Sigmoid colon (tissue), 7 donors: ENCODE measurements at regions of chr4 and their contacts with region 1.

Region 1: GRCh38 chr4:148089624-148090023 is 352.6 kb downstream of the NR3C2 start:
- DNase-seq: no peak
- H3K4me3 ChIP-seq: no peak overlapping the region
- H3K27ac ChIP-seq: no peak overlapping the region
- H3K4me1 ChIP-seq: peaks cover 0 to 26% (median 6%) of the 10 kb centered on the region in 4 donors
- H3K27me3 ChIP-seq: no peaks in the 10 kb centered on the region
- CTCF ChIP-seq: no peak
- EP300 ChIP-seq: no peak
- POLR2A ChIP-seq: no peak

Region 2: DNA sequence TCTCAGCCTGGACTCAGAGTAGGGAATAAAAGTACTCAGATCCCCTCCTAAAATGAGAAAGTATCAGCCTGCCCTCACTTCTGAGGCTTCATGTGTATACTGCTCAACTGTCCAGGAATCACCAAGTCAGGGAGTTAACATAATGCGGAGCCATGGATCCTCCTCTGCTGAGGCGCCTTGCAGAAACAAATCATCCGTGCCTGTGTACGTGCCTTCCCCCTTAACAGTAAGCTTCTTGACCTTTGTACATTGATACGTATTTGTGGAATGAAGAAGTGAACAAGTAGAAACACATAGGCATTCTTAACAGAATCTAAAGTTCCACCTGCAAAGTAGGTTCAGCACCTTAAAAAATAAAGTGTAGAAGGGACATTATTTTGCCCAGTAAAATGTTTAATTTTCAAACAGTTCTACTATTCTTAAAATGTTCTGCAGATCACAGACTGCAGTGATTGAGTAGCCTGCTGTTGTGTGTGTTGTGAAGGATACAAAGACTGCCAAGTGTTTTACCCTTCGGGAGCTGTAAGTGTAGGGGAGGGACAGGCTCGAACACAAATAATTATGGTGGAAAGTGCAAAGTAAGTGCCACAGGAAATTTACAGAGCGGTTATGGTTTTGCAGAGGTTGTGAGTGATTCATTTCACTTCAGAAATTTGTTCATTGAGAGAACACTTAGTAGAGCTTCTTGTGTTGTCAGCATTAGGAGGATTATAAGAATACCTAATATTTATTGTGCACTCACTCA is 295.9 kb before region 1 on chr4:
- intact Hi-C with region 1: no loop called
- DNase-seq: no peak
- H3K4me3 ChIP-seq: no peak overlapping the region
- H3K27ac ChIP-seq: peak overlapping the region in 3 of 4 donors; percentile 0 to 56 (median 55)
- H3K4me1 ChIP-seq: peaks cover 0 to 60% (median 55%) of the 10 kb centered on the region in 4 donors
- H3K27me3 ChIP-seq: no peaks in the 10 kb centered on the region
- CTCF ChIP-seq: no peak
- EP300 ChIP-seq: no peak
- POLR2A ChIP-seq: no peak

Region 3: DNA sequence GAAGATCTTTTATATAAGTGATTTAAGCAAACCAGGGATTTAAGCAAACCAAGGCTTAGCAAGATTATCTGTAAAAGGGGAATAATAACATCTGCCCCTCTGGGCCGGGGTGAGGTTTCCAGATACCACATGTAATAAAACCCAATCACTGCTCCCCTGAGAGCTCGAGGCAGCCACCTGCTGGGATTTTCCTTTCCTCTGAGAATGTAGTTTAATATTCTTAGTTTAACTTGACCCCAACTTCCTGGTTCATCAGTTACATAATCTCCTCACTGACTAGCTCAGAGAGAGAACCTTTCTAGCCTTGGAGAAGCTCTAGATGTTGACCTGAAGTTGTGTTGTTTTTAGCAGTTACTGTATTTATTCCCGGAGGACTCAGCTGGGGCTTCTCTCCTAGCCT is 35.3 kb before region 1 on chr4:
- intact Hi-C with region 1: loop called (anchors 5 kb)
- DNase-seq: no peak
- H3K4me3 ChIP-seq: no peak overlapping the region
- H3K27ac ChIP-seq: peak overlapping the region in 1 of 4 donors; percentile 7
- H3K4me1 ChIP-seq: peaks cover 0 to 62% (median 45%) of the 10 kb centered on the region in 4 donors
- H3K27me3 ChIP-seq: no peaks in the 10 kb centered on the region
- CTCF ChIP-seq: no peak
- EP300 ChIP-seq: no peak
- POLR2A ChIP-seq: no peak